ENCODE measurements at regions of chr1 and their contacts with region 1.

Region 1: GRCh38 chr1:168386949-168387586 is 106.4 kb downstream of the TBX19 start:
- DNase-seq: peak; percentile 44 to 73 (median 64)
- ATAC-seq: peak; percentile 91
- H3K4me3 ChIP-seq: peak overlapping the region; percentile 26
- H3K4me3 Mint-ChIP-seq: peak overlapping the region in 9 of 10 donors; percentile 46 to 73 (median 62)
- H3K27ac ChIP-seq: no peak overlapping the region
- H3K27ac Mint-ChIP-seq: peak overlapping the region in 7 of 9 donors; percentile 33 to 81 (median 72)
- H3K4me1 ChIP-seq: peaks cover 10 to 28% of the 10 kb centered on the region in 2 donors
- H3K4me1 Mint-ChIP-seq: peaks cover 4 to 23% (median 7%) of the 10 kb centered on the region in 7 donors
- H3K27me3 ChIP-seq: no peaks in the 10 kb centered on the region
- H3K27me3 Mint-ChIP-seq: peaks cover 6 to 39% (median 9%) of the 10 kb centered on the region in 5 donors

Region 2: DNA sequence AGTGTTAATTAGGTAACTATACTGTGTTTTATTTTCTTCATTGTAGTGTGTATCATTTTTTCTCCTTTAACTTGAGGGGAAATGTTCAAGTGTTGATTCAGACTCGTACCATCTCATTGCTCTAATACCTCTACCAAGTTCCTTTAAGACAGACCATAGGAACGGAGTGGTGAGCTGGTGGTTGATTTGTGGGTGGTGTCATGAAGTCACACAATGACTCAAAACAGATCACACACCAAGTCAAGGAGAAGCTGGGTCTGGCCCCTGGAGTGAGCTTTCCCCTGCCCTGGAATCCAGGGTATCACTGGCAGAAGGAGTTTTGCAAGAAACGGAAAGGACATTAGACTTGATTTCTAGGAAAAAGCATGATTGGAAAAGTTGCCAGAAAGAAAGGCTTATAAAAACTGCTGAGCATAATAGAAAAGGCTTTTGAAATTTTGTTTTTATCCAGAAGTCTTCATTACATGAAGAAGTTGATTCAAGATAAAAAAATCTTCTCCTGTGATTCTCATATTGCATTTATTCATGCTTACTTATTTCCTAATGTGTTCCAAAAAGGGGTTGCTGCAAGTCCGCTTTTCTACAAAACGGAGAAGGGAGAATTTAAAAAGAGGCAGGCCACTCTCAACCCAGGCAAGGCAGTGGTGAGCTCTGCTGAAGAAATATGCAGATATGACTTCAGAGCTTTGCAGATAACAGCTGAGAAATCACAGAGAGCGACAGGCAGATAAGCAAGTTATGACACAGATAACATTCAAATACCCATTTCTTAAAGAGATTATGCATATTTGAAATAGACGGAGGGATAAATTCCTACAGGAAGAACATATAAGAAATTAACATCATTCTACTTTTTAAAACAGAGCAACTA is 26.7 kb before region 1 on chr1:
- CTCF ChIA-PET with region 1: no interaction called
- POLR2A ChIA-PET with region 1: no interaction called
- intact Hi-C with region 1: loop called in 1 of 2 experiments (anchors 1 kb)
- DNase-seq: peak in 1 of 9 donors; percentile 51
- ATAC-seq: no peak
- H3K4me3 ChIP-seq: no peak overlapping the region
- H3K4me3 Mint-ChIP-seq: peak overlapping the region in 1 of 10 donors; percentile 49
- H3K27ac ChIP-seq: no peak overlapping the region
- H3K27ac Mint-ChIP-seq: peak overlapping the region in 2 of 9 donors; percentile 35 to 70
- H3K4me1 ChIP-seq: peaks cover 4 to 37% of the 10 kb centered on the region in 2 donors
- H3K4me1 Mint-ChIP-seq: peaks cover 8 to 45% (median 10%) of the 10 kb centered on the region in 7 donors
- H3K27me3 ChIP-seq: no peaks in the 10 kb centered on the region
- H3K27me3 Mint-ChIP-seq: peaks cover 0 to 12% (median 5%) of the 10 kb centered on the region in 5 donors

Region 3: DNA sequence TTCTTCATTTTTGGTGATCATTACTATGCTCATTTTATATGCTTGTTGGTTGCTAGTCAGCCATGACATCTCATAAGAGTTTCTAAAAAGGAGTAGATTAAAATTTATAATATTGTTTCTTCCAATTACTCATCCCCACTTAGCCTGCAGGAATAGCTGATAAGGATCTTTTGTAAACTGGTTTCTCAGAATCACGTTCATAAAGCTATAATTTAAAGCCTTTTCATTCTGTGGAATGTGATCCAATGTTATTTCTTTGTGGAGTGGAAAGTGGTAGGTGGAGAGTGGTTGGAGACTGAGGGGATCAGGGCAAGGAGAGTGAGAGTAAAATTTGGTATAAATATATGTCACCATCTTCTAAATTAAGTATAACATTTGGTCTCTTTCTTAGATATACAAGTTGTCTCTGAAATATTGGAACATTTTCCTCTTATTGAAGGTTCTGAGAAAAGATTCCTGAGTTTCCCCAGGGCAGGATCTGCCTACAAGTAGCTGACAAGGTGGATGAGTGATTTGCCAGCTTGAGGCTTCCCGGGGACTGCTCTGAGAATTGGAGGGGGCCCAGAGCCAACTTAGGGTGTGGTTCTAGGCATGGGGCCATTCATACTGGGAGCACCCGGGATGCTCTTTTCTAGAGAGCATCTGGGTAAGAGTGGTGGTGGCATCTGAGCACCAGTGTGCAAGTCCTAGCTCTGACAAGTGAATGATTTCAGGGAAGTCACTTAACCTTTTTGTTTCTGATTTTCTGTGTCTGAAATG is 10.1 kb after region 1 on chr1:
- CTCF ChIA-PET with region 1: interaction called, 3 read pairs
- POLR2A ChIA-PET with region 1: no interaction called
- intact Hi-C with region 1: loop called in 1 of 2 experiments (anchors 1 kb)
- DNase-seq: no peak
- ATAC-seq: no peak
- H3K4me3 ChIP-seq: no peak overlapping the region
- H3K4me3 Mint-ChIP-seq: no peak overlapping the region
- H3K27ac ChIP-seq: no peak overlapping the region
- H3K27ac Mint-ChIP-seq: no peak overlapping the region
- H3K4me1 ChIP-seq: peaks cover 0 to 11% of the 10 kb centered on the region in 2 donors
- H3K4me1 Mint-ChIP-seq: peaks cover 0 to 28% (median 0%) of the 10 kb centered on the region in 7 donors
- H3K27me3 ChIP-seq: no peaks in the 10 kb centered on the region
- H3K27me3 Mint-ChIP-seq: peaks cover 5 to 32% (median 10%) of the 10 kb centered on the region in 5 donors

Measured in naive thymus-derived CD4-positive, alpha-beta T cell (primary cell).